CD14-positive monocyte (primary cell): ENCODE measurements at regions of chr7 and their contacts with region 1.

Region 1: DNA sequence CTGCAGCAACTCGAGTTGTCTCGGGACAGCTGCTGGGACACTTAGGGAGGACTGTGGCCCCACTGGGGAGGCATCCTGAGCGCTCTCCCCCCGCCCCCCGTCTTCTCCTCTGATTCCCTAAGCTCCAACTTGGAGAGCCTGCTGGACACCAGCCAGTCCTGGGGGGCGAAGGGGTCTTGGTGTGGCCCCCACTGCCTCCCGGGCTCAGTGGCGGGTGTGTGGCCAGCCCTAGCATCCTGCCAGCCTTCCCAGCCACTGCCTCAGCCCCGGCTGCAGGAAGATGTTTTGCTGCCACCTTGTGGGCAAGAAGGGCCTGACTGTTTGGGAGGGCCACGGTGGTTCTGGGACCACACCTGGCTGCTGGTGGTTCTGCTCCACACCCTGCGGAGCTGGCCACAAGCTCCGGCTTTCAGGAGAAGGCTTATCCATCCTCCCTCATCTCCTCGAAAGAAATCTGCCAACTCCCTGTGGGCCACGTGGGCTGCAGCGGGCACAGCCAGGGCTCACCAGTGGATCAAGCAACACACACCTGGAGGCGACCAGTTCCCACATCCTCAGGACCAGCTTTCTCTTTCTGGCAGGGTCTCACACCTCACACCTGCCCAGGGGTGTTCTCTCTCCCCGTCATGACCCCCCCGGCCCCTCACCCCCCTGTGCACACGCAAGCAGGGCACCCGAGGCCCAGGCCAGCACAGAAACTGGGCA is 24.8 kb downstream of the AGAP3 start:
- DNase-seq: peak; percentile 61 to 74 (median 72)
- H3K4me3 ChIP-seq: no peak overlapping the region
- H3K4me3 Mint-ChIP-seq: no peak overlapping the region
- H3K27ac ChIP-seq: no peak overlapping the region
- H3K27ac Mint-ChIP-seq: no peak overlapping the region
- H3K4me1 ChIP-seq: peaks cover 3 to 7% of the 10 kb centered on the region in 2 donors
- H3K4me1 Mint-ChIP-seq: peaks cover 16% of the 10 kb centered on the region
- H3K27me3 ChIP-seq: peaks cover 2 to 17% of the 10 kb centered on the region in 2 donors
- H3K27me3 Mint-ChIP-seq: peaks cover 21 to 29% (median 21%) of the 10 kb centered on the region in 3 donors
- CTCF ChIP-seq: peak; percentile 89

Region 2: GRCh38 chr7:150898475-150899011 is 212.6 kb before region 1 on chr7:
- intact Hi-C with region 1: loop called in 1 of 2 experiments (anchors 10 kb)
- DNase-seq: peak; percentile 40 to 62 (median 44)
- H3K4me3 ChIP-seq: no peak overlapping the region
- H3K4me3 Mint-ChIP-seq: peak overlapping the region in 1 of 2 donors; percentile 36
- H3K27ac ChIP-seq: no peak overlapping the region
- H3K27ac Mint-ChIP-seq: no peak overlapping the region
- H3K4me1 ChIP-seq: peaks cover 0 to 2% of the 10 kb centered on the region in 2 donors
- H3K4me1 Mint-ChIP-seq: peaks cover 7% of the 10 kb centered on the region
- H3K27me3 ChIP-seq: peaks cover 0 to 30% of the 10 kb centered on the region in 2 donors
- H3K27me3 Mint-ChIP-seq: peaks cover 42 to 70% (median 49%) of the 10 kb centered on the region in 3 donors
- CTCF ChIP-seq: peak; percentile 96

Region 3: GRCh38 chr7:151017953-151018420 is 93.1 kb before region 1 on chr7:
- intact Hi-C with region 1: loop called (anchors 5 kb)
- DNase-seq: peak; percentile 29 to 45 (median 39)
- H3K4me3 ChIP-seq: peak overlapping the region in 1 of 3 experiments; percentile 51
- H3K4me3 Mint-ChIP-seq: peak overlapping the region; percentile 56 to 88
- H3K27ac ChIP-seq: no peak overlapping the region
- H3K27ac Mint-ChIP-seq: peak overlapping the region in 5 of 7 donors; percentile 30 to 78 (median 70)
- H3K4me1 ChIP-seq: peaks cover 29 to 44% of the 10 kb centered on the region in 2 donors
- H3K4me1 Mint-ChIP-seq: peaks cover 35% of the 10 kb centered on the region
- H3K27me3 ChIP-seq: peaks cover 23 to 54% of the 10 kb centered on the region in 2 donors
- H3K27me3 Mint-ChIP-seq: peaks cover 57 to 86% (median 67%) of the 10 kb centered on the region in 3 donors
- CTCF ChIP-seq: peak; percentile 91

Region 4: GRCh38 chr7:151057989-151058780 is 52.9 kb before region 1 on chr7:
- intact Hi-C with region 1: loop called in 1 of 2 experiments (anchors 2 kb)
- DNase-seq: peak; percentile 97 to 99 (median 98)
- H3K4me3 ChIP-seq: peak overlapping the region; percentile 66 to 97 (median 94)
- H3K4me3 Mint-ChIP-seq: peak overlapping the region; percentile 93 to 98
- H3K27ac ChIP-seq: peak overlapping the region; percentile 82 to 89
- H3K27ac Mint-ChIP-seq: peak overlapping the region; percentile 82 to 93 (median 89)
- H3K4me1 ChIP-seq: peaks cover 41 to 50% of the 10 kb centered on the region in 2 donors
- H3K4me1 Mint-ChIP-seq: peaks cover 41% of the 10 kb centered on the region
- H3K27me3 ChIP-seq: no peaks in the 10 kb centered on the region
- H3K27me3 Mint-ChIP-seq: peaks cover 0 to 2% (median 1%) of the 10 kb centered on the region in 3 donors
- CTCF ChIP-seq: no peak

Region 5: GRCh38 chr7:151091431-151091830 is 19.7 kb before region 1 on chr7:
- intact Hi-C with region 1: loop called (anchors 1 to 2 kb)
- DNase-seq: peak; percentile 53 to 73 (median 64)
- H3K4me3 ChIP-seq: no peak overlapping the region
- H3K4me3 Mint-ChIP-seq: no peak overlapping the region
- H3K27ac ChIP-seq: no peak overlapping the region
- H3K27ac Mint-ChIP-seq: peak overlapping the region in 2 of 7 donors; percentile 25 to 59
- H3K4me1 ChIP-seq: peaks cover 37 to 49% of the 10 kb centered on the region in 2 donors
- H3K4me1 Mint-ChIP-seq: peaks cover 45% of the 10 kb centered on the region
- H3K27me3 ChIP-seq: no peaks in the 10 kb centered on the region
- H3K27me3 Mint-ChIP-seq: no peaks in the 10 kb centered on the region
- CTCF ChIP-seq: peak; percentile 75

Region 6: GRCh38 chr7:151327659-151328058 is 216.6 kb after region 1 on chr7:
- intact Hi-C with region 1: no loop called
- DNase-seq: no peak
- H3K4me3 ChIP-seq: no peak overlapping the region
- H3K4me3 Mint-ChIP-seq: no peak overlapping the region
- H3K27ac ChIP-seq: no peak overlapping the region
- H3K27ac Mint-ChIP-seq: no peak overlapping the region
- H3K4me1 ChIP-seq: no peaks in the 10 kb centered on the region
- H3K4me1 Mint-ChIP-seq: no peaks in the 10 kb centered on the region
- H3K27me3 ChIP-seq: peaks cover 0 to 2% of the 10 kb centered on the region in 2 donors
- H3K27me3 Mint-ChIP-seq: peaks cover 3 to 13% (median 8%) of the 10 kb centered on the region in 3 donors
- CTCF ChIP-seq: no peak

Region 7: GRCh38 chr7:151790830-151791620 is 679.9 kb after region 1 on chr7:
- intact Hi-C with region 1: no loop called
- DNase-seq: peak in 1 of 3 donors; percentile 38
- H3K4me3 ChIP-seq: no peak overlapping the region
- H3K4me3 Mint-ChIP-seq: no peak overlapping the region
- H3K27ac ChIP-seq: peak overlapping the region in 1 of 2 donors; percentile 22
- H3K27ac Mint-ChIP-seq: peak overlapping the region in 6 of 7 donors; percentile 9 to 77 (median 63)
- H3K4me1 ChIP-seq: peaks cover 27 to 43% of the 10 kb centered on the region in 2 donors
- H3K4me1 Mint-ChIP-seq: peaks cover 59% of the 10 kb centered on the region
- H3K27me3 ChIP-seq: no peaks in the 10 kb centered on the region
- H3K27me3 Mint-ChIP-seq: peaks cover 0 to 3% (median 0%) of the 10 kb centered on the region in 3 donors
- CTCF ChIP-seq: no peak